ENCODE measurements at regions of chr2 and their contacts with region 1.

Region 1: DNA sequence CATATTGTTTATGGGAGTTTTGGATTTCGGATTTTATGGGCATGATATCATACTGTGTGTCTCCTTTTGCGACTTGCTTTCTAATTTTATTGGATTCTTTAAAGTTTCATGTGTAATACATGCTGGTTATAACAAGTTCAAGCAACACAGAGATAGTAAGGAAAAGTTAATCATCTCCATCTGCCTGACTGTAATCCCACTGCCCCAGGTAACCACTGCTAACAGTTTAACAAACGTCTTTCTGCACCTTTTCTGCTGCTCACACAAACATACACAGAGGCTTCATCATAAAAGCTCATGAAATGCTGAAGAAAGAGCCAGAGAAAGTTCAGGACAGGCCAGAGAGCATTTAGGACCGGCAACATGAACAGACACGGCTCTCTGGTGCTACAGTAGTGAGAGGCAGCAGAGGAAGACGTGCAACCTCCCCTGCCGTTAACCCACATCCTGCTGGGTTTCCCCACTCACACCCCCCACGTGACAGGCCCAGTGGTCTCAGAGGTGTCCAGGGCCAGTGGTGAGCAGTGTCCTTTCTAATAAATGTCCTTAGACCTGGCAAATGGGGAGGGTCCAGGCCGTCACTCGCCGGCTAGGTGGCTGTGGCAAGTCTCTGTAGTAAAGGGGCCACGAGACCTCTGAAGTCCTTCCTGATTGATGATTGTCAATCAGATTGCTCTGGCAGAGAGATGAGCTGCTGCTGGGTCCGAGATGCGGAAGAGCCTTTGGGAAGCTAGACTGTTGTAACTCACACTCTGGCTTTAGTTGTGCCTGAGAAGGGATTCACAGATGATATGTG is 43.0 kb upstream of the SLC1A4 start:
- DNase-seq: peak; percentile 52 to 82 (median 78)
- H3K4me3 ChIP-seq: peak overlapping the region in 5 of 7 experiments; percentile 0 to 55 (median 50)
- H3K27ac ChIP-seq: peak overlapping the region; percentile 89 to 91
- H3K4me1 ChIP-seq: peaks cover 15 to 82% (median 76%) of the 10 kb centered on the region in 4 experiments
- H3K27me3 ChIP-seq: no peaks in the 10 kb centered on the region

Region 2: DNA sequence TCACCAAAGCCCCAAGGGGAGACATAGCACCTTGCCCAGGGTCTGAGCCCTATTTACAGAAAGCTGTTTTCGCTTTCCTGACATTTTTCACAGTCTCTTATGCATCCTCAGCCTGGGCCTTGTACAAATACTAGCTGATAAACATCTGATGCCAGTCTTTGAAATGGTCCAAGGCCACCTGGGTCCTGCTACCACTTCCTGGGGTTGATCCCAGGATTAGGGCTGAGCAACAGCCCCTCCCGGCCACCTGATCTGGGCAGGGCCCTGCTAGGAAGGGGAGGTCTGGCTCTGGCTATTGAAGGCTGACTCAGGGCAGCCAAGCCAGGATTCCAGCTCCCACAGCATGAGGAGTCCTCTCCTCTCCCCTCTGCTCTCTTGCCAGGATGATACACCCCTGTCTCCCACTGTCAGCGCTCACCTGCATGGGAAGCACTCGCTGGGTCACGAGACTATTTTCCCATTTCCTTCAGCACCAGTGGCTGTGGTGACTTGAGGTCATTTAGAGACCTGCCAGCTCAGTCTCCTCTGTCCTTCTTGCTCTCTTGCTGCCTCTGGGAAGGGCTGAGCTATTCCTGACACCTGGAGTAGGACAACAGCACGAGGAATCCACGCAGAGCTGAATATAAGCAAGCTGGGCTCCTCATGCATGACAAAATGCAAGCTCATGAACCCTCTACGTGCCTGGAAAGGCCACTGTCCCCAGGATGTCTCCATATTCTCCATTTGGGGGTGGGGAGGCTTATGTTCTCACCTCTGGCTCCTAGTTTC is 545.3 kb before region 1 on chr2:
- CTCF ChIA-PET with region 1: no interaction called
- POLR2A ChIA-PET with region 1: no interaction called
- DNase-seq: no peak
- H3K4me3 ChIP-seq: no peak overlapping the region
- H3K27ac ChIP-seq: no peak overlapping the region
- H3K4me1 ChIP-seq: peaks cover 0 to 15% (median 7%) of the 10 kb centered on the region in 4 experiments
- H3K27me3 ChIP-seq: no peaks in the 10 kb centered on the region

Region 3: DNA sequence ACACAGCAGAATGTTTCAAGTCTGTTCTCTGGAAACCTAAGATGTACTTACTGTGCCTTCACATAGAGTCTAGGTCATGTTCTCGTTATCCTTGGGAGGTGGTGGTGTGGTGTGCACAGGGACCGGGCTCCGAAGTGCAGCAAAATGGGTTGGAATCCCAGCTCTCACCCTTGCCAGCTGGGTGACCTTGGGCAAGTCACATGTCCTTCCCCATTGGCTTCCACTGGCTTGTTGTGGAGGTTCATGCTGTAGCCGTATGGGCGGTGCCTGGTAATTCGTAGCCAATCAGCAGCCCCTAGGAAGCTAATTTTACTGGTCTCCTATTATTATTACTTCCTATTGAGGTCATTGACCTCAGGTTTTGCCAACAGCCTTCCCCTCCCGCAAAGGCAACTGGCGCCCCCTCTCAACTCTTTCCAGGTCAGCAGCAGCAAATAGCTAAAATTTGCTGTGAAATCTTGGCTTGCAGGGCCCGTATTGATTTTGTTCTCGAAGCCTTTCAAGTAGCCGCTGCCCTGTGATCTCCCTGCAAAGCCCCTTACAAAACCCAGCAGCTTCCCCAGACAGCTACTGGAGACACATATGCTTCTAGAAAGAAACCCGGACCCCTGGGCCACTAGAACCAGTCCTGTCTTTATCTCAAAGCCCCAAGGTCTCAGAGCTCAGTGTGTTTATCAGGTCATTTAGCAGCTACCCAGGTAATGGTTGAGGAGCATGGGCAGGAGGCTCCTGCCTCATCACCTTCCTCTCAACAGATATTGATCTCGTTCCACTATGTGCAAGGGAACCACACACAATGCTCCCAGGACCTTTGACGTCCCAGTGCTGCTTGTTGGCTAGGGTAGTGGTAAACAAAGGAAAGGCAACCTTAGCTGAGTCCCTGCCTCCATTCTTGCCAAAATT is 23.4 kb before region 1 on chr2:
- CTCF ChIA-PET with region 1: interaction called, 36 read pairs
- POLR2A ChIA-PET with region 1: interaction called, 4 read pairs
- DNase-seq: no peak
- H3K4me3 ChIP-seq: no peak overlapping the region
- H3K27ac ChIP-seq: no peak overlapping the region
- H3K4me1 ChIP-seq: peaks cover 5 to 15% (median 8%) of the 10 kb centered on the region in 4 experiments
- H3K27me3 ChIP-seq: no peaks in the 10 kb centered on the region

Region 4: DNA sequence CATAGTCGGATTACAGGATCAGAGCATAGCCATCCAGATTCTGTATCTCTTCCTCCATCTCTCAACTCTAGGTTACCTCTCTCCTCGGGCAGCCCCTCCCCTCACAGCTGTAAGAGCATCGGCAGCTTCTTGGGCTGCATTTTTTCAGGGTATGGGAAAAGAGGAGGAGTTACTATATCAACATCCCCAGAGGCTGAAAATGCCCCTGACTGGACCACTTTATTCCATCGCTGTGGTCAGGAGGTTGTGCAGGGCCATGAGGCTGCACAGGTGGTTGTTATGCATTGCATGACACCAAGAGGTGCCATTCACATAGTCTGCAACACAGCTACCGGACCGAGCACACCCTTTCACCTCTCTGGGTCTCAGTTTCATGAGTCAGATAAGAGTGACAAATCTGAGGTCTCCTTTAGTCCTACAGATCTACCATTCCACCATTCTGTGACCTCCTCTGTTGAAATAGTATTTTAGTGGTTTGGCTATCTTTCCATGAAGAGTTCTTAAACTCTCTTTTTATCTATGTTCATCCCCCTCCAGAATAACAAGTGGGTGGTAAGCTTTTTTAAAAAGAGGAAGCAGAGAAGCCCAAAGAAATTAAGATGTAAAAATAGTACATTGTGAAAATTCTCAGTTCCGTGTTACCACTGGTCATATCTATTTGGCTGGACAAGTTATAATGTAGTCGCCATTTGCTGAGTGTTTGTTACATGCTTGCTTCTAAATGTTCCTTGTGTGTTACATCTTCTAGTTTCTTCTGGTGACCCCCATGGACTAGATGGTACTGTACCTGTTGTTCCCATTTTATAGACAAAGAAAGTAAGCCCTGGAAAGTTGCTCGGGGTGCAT is 13.6 kb before region 1 on chr2:
- CTCF ChIA-PET with region 1: interaction called, 10 read pairs
- POLR2A ChIA-PET with region 1: interaction called, 3 read pairs
- DNase-seq: peak in 2 of 3 donors; percentile 69 to 76
- H3K4me3 ChIP-seq: peak overlapping the region in 1 of 7 experiments; percentile 3
- H3K27ac ChIP-seq: no peak overlapping the region
- H3K4me1 ChIP-seq: peaks cover 6 to 34% (median 22%) of the 10 kb centered on the region in 4 experiments
- H3K27me3 ChIP-seq: no peaks in the 10 kb centered on the region

Region 5: GRCh38 chr2:65103013-65103715 is 157.0 kb after region 1 on chr2:
- CTCF ChIA-PET with region 1: no interaction called
- POLR2A ChIA-PET with region 1: no interaction called
- DNase-seq: no peak
- H3K4me3 ChIP-seq: no peak overlapping the region
- H3K27ac ChIP-seq: no peak overlapping the region
- H3K4me1 ChIP-seq: no peaks in the 10 kb centered on the region
- H3K27me3 ChIP-seq: no peaks in the 10 kb centered on the region